ENCODE measurements at regions of chr21 and their contacts with region 1.

Region 1: DNA sequence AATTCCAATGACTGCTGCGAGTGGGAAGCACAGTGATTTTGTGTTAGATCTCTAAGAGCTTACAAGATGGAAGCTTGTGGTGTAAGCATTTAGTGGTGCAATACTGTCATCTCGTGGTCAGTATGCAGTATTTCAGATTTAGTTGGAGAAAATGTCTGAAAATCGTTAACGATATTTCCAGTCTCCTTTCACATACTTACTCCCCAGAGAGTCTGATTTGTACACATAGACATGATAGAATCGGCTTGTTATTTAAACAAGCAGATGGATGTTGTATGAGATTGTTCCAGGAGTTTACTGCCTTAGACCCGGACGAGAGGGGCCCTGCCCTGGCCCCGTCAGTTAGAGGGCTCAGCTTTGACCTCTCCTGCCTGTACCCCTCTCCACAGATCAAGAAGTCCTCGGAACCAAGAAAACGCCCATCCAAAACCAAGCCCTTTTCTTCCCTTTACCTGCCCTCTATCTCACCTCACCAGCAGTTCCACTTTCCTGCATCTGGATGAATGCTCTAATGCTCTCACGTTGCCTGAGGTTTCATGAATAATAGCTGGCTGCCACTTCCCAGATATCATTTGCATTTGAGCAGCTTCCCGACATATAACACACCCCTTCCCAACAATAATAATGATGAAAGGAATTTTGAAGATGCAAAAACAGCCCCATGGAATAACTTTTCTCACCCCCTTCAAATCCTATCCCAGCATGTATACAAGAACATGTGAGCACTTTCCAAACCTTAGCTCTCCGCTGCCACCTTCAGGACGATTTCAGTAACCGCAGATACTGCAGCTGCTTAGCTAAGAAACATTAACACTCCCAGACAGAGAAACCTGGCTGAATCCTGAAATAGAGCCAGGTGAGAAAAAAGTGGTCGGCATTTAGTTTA is 247.3 kb downstream of the LTN1 start:
- DNase-seq: peak; percentile 78
- ATAC-seq: peak; percentile 84
- H3K4me3 Mint-ChIP-seq: no peak overlapping the region
- H3K27ac Mint-ChIP-seq: no peak overlapping the region
- H3K4me1 Mint-ChIP-seq: no peaks in the 10 kb centered on the region
- H3K27me3 Mint-ChIP-seq: no peaks in the 10 kb centered on the region
- CTCF ChIP-seq: peak; percentile 75

Region 2: DNA sequence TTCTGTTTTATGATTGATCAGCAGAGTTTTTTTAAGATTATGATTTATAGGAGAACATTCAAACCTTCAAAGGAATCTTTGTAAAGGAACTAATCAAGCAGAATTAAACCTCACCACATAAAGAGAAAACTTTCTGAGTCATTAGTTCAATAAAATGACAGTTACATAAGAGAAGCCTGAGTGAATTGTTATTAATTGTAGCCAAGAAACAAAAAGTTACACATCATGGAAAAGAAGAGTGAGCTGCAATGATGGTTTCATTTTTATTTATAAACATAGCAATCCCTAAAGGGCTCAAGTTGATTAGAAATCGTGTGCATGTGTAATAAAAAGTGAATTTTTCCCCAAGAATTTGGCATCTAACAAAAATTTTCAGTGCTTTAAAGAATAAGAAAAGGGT is 484.1 kb before region 1 on chr21:
- CTCF ChIA-PET with region 1: no interaction called
- POLR2A ChIA-PET with region 1: no interaction called
- intact Hi-C with region 1: no loop called
- DNase-seq: no peak
- ATAC-seq: no peak
- H3K4me3 Mint-ChIP-seq: no peak overlapping the region
- H3K27ac Mint-ChIP-seq: no peak overlapping the region
- H3K4me1 Mint-ChIP-seq: no peaks in the 10 kb centered on the region
- H3K27me3 Mint-ChIP-seq: no peaks in the 10 kb centered on the region
- CTCF ChIP-seq: no peak

Region 3: DNA sequence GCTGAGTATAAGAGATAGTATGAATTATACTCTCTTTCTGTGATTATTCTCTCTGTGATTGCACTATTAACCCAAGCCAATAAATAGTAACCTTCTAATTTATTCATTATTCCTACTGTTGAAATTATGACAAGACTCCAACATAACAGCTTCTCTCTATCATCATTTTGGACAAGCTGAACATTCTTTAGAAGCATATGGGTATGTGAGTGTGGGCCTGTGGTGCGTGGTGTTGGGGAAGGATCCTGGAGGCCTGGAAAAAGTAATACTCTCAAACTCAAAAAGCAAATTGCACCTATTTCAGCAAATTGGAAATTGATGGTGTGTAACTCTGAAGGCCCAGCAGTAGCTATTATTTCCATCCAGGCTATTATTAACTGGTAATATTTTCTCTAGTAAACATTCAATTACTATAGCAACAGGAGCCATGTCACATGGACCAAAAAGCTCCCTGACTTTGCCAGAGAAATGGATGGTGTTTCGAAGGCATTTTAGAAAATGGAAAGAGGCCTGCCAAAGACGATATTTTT is 255.5 kb before region 1 on chr21:
- CTCF ChIA-PET with region 1: interaction called, 12 read pairs
- POLR2A ChIA-PET with region 1: no interaction called
- intact Hi-C with region 1: no loop called
- DNase-seq: no peak
- ATAC-seq: no peak
- H3K4me3 Mint-ChIP-seq: no peak overlapping the region
- H3K27ac Mint-ChIP-seq: no peak overlapping the region
- H3K4me1 Mint-ChIP-seq: no peaks in the 10 kb centered on the region
- H3K27me3 Mint-ChIP-seq: no peaks in the 10 kb centered on the region
- CTCF ChIP-seq: no peak

Region 4: DNA sequence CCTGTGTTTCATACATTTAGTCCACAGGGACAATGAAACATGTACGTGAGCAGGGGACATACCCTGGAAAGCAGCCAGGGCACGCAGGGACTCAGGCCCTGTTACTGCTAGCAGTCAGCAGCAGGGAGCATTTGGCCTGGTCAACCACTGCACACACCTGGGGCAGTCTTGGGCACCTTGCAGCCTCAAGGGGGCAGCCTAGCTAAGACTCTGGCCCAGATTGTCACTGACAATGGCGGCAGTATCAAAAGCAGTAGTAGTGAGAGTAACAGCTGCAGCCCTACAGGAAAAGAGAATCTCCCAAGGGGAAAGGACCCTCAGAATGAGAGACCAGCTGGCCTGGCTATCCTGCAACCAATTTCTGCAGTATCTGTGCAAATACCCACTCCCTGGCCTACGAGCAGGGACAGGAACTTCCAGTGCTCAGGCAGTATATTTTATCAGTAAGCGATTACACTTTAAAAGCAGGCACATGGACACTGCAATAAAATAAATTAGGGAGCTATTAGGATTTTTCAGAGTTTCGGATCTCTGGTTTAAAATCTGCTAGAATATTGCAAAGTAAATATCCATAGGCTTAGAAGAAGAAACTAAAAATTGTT is 228.3 kb before region 1 on chr21:
- CTCF ChIA-PET with region 1: interaction called, 165 read pairs
- POLR2A ChIA-PET with region 1: no interaction called
- intact Hi-C with region 1: loop called (anchors 1 kb)
- DNase-seq: peak; percentile 81
- ATAC-seq: peak; percentile 94
- H3K4me3 Mint-ChIP-seq: no peak overlapping the region
- H3K27ac Mint-ChIP-seq: no peak overlapping the region
- H3K4me1 Mint-ChIP-seq: peaks cover 2% of the 10 kb centered on the region
- H3K27me3 Mint-ChIP-seq: peaks cover 2% of the 10 kb centered on the region
- CTCF ChIP-seq: peak; percentile 70

Region 5: DNA sequence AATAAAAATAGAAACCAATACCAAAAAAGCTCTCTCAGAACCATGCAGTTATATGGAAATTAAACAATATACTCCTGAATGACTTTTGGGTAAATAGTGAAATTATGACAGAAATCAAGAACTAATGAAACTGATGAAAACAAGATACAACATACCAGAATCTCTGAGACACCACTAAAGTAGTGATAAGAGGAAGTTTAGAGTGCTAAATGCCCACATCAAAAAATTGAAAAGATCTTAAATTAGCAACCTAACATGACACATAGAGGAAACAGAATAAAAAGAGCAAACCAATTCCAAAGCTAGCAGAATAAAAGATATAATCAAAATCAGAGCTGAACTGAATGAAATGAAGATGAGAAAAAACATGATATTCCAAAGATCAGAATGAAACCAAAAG is 183.6 kb before region 1 on chr21:
- CTCF ChIA-PET with region 1: interaction called, 11 read pairs
- POLR2A ChIA-PET with region 1: no interaction called
- intact Hi-C with region 1: no loop called
- DNase-seq: no peak
- ATAC-seq: peak; percentile 37
- H3K4me3 Mint-ChIP-seq: no peak overlapping the region
- H3K27ac Mint-ChIP-seq: no peak overlapping the region
- H3K4me1 Mint-ChIP-seq: peaks cover 20% of the 10 kb centered on the region
- H3K27me3 Mint-ChIP-seq: no peaks in the 10 kb centered on the region
- CTCF ChIP-seq: no peak

Region 6: DNA sequence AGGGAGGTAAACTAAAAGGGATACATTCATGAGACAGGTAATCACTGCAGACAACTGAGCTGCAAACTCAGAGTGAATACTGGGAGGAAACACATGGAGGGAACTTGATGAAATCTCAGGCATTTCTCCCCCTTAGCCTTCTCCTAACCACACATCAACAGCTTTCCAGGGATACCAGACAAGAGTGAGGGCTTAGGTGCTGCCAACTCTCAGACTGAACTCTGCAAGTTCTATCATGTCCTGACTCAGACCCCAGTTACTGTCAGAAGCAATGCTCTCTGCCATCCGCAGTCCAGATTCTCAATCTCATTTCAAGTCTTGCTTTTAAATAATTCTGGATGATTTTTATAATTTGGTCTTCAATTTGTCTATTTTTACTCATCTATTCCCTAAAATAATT is 20.0 kb before region 1 on chr21:
- CTCF ChIA-PET with region 1: interaction called, 12 read pairs
- POLR2A ChIA-PET with region 1: no interaction called
- intact Hi-C with region 1: no loop called
- DNase-seq: no peak
- ATAC-seq: no peak
- H3K4me3 Mint-ChIP-seq: no peak overlapping the region
- H3K27ac Mint-ChIP-seq: no peak overlapping the region
- H3K4me1 Mint-ChIP-seq: no peaks in the 10 kb centered on the region
- H3K27me3 Mint-ChIP-seq: no peaks in the 10 kb centered on the region
- CTCF ChIP-seq: no peak

Region 7: GRCh38 chr21:28832013-28832714 is 86.8 kb after region 1 on chr21:
- CTCF ChIA-PET with region 1: interaction called, 12 read pairs
- POLR2A ChIA-PET with region 1: no interaction called
- intact Hi-C with region 1: no loop called
- DNase-seq: peak; percentile 31
- ATAC-seq: peak; percentile 90
- H3K4me3 Mint-ChIP-seq: no peak overlapping the region
- H3K27ac Mint-ChIP-seq: peak overlapping the region; percentile 60
- H3K4me1 Mint-ChIP-seq: peaks cover 62% of the 10 kb centered on the region
- H3K27me3 Mint-ChIP-seq: no peaks in the 10 kb centered on the region
- CTCF ChIP-seq: no peak

Region 8: GRCh38 chr21:28943631-28944030 is 198.3 kb after region 1 on chr21:
- CTCF ChIA-PET with region 1: interaction called, 24 read pairs
- POLR2A ChIA-PET with region 1: no interaction called
- intact Hi-C with region 1: loop called (anchors 10 kb)
- DNase-seq: no peak
- ATAC-seq: no peak
- H3K4me3 Mint-ChIP-seq: no peak overlapping the region
- H3K27ac Mint-ChIP-seq: peak overlapping the region; percentile 55
- H3K4me1 Mint-ChIP-seq: no peaks in the 10 kb centered on the region
- H3K27me3 Mint-ChIP-seq: no peaks in the 10 kb centered on the region
- CTCF ChIP-seq: no peak

Region 9: GRCh38 chr21:29091032-29091431 is 345.7 kb after region 1 on chr21:
- CTCF ChIA-PET with region 1: no interaction called
- POLR2A ChIA-PET with region 1: no interaction called
- intact Hi-C with region 1: no loop called
- DNase-seq: no peak
- ATAC-seq: no peak
- H3K4me3 Mint-ChIP-seq: no peak overlapping the region
- H3K27ac Mint-ChIP-seq: no peak overlapping the region
- H3K4me1 Mint-ChIP-seq: peaks cover 2% of the 10 kb centered on the region
- H3K27me3 Mint-ChIP-seq: no peaks in the 10 kb centered on the region
- CTCF ChIP-seq: no peak